Psoas muscle (tissue), 8 donors: ENCODE measurements at regions of chr11 and their contacts with region 1.

Region 1: DNA sequence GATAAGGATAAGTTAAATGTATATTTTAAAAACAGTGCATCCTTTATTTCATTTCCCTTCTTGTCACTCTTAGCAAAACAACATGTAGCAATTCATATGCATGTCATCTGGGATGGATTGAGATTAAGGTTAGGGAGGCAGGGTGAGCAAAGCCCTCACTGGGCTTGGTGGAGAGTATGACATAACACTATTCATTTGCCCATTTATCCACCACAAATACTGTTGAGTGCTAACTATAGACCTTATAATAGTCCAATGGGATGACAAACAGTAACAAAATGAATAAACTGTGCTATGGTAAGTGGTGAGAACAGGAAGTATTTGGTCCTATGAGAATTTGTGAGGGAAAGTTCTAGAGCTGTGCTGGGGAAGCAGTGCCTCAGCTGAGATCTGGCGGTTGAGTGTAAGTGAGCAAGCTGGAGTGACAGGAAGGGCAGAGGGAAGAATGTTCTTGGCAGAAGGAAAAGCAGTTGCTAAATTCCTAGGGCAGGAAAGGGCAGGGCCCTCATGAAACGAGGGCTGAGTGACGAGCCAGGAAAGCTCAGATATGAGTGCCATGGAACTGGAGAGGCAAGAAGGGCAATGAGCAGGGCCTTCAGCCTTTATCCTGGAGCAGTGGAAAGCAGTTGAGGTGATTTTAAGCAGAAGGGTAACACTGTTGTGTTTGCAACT is 6.7 kb downstream of the HSD17B12 start:
- DNase-seq: peak; percentile 34 to 71
- ATAC-seq: peak; percentile 97 to 99 (median 98)
- H3K4me3 ChIP-seq: peak overlapping the region; percentile 3
- H3K27ac ChIP-seq: peak overlapping the region; percentile 54
- H3K4me1 ChIP-seq: peaks cover 60% of the 10 kb centered on the region
- H3K27me3 ChIP-seq: no peaks in the 10 kb centered on the region
- CTCF ChIP-seq: no peak

Region 2: GRCh38 chr11:43589606-43590250 is 97.5 kb before region 1 on chr11:
- intact Hi-C with region 1: no loop called
- DNase-seq: no peak
- ATAC-seq: no peak
- H3K4me3 ChIP-seq: no peak overlapping the region
- H3K27ac ChIP-seq: no peak overlapping the region
- H3K4me1 ChIP-seq: no peaks in the 10 kb centered on the region
- H3K27me3 ChIP-seq: peaks cover 2 to 20% (median 2%) of the 10 kb centered on the region in 3 donors
- CTCF ChIP-seq: no peak

Region 3: DNA sequence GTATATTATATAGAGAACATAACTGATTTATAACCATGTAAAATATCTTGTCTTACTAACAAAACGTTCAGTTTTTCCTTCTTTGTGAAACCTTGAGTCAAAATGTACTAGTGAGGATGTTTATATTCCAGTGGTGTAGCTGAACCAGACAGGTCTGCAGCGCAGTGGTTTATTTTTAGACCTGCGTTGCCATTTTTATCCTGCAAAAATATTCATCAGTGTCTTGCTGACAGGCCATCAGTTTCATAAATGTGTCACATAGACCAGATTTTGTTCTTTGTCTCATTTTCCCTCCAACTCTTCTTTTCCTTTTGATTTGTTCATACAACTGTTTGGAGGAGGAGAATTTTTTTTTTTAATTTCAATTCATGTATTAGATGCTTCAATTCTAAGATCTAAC is 36.4 kb after region 1 on chr11:
- intact Hi-C with region 1: loop called in 1 of 2 experiments (anchors 5 kb)
- DNase-seq: no peak
- ATAC-seq: peak in 3 of 4 donors; percentile 58 to 82 (median 64)
- H3K4me3 ChIP-seq: no peak overlapping the region
- H3K27ac ChIP-seq: no peak overlapping the region
- H3K4me1 ChIP-seq: peaks cover 21% of the 10 kb centered on the region
- H3K27me3 ChIP-seq: no peaks in the 10 kb centered on the region
- CTCF ChIP-seq: no peak